ENCODE measurements at regions of chr7 and their contacts with region 1.

Region 1: GRCh38 chr7:47088329-47089067 is 493.4 kb downstream of the TNS3 start:
- DNase-seq: peak; percentile 67
- ATAC-seq: peak; percentile 90 to 91

Region 2: GRCh38 chr7:46363688-46364303 is 724.7 kb before region 1 on chr7:
- intact Hi-C with region 1: loop called in 1 of 2 experiments (anchors 5 kb)
- DNase-seq: no peak
- ATAC-seq: no peak

Region 3: GRCh38 chr7:46745707-46746090 is 342.8 kb before region 1 on chr7:
- intact Hi-C with region 1: no loop called
- DNase-seq: no peak
- ATAC-seq: no peak

Region 4: GRCh38 chr7:46776790-46777189 is 311.7 kb before region 1 on chr7:
- intact Hi-C with region 1: loop called (anchors 2 to 10 kb)
- DNase-seq: no peak
- ATAC-seq: no peak

Measured in left cardiac atrium (tissue), 4 donors.